ENCODE measurements at regions of chr3 and their contacts with region 1.

Region 1: DNA sequence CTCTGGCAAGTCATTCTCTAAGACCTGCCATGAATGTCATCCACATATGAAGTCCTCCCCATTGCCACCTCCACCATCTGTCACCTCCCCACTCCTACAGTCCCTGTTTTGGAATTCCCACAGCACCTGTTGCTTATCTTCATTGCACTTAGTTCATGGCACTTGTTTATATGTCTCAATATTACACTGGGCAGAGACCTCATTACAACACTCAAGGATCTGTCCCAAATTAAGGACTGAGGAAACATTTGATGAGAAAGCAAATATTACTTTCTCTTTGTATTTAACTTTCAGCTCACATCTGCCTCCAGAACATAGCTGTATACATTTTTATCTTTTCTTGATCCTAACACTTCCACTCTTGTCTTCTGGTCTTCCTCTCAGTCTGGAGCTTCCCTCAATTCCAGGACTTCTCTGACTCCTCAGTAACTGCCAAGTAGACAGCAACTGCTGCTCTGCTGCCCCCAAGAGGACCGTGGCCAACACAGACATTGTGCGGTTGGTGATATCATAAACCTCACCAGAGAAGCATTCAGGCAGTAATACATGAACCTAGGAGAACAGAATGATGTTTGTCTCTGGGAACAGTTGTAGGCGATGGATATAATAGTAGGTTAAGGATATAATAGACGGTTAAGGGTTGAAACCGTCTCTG is 45.0 kb upstream of the FGF12 start:
- DNase-seq: no peak
- H3K4me3 ChIP-seq: no peak overlapping the region
- H3K27ac ChIP-seq: no peak overlapping the region
- H3K4me1 ChIP-seq: no peaks in the 10 kb centered on the region
- CTCF ChIP-seq: peak; percentile 62

Region 2: DNA sequence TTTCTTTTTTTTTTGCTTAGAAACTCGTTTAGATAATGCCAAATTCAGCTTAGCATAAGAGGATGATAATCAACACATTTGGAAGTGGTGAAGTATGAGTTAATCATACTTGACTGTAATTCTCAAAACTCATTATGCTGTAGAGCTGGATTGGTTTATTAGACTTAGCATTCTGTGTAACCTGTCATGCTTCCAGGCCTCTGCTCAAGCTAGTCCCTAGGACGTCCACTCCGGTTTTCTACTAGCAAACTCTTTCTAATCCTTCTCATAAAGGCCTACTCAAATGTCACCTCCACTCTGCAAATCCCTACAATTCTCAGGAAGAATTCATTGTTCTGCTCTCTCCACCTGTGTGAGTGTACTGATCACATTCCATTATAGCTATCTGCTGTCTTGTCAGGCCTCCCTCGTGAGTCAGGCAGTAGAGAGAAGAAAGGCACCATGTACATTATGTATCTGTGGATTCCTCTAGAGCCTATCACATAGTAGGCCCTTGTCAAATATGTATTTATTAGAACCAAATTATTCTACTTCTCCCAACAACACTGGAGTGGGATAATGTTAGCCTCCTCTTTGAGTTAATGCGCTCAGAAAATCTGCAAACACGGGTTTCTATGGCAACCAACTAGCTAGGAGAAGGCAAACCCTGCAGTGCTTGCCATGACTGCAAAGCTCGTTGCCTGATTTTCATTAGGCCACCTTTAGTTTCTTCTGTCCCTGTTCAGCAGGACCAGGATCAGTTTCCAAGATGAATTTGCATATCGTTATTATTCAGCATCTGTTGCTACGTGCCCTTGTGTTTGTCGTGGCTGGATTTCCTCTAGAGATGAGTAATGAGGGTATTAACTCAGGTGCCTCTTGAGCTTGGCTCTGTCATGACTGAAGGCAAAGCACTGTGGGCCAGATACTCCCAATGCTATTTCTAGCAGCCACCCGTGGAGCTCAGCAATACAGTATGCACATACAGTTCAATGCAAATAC is 575.4 kb after region 1 on chr3:
- CTCF ChIA-PET with region 1: no interaction called
- POLR2A ChIA-PET with region 1: no interaction called
- intact Hi-C with region 1: loop called (anchors 5 kb)
- DNase-seq: no peak
- H3K4me3 ChIP-seq: no peak overlapping the region
- H3K27ac ChIP-seq: no peak overlapping the region
- H3K4me1 ChIP-seq: no peaks in the 10 kb centered on the region
- CTCF ChIP-seq: no peak

Measured in OCI-LY7 (cell line).